Right ventricle myocardium superior (tissue), 1 donor: ENCODE measurements at regions of chr9 and their contacts with region 1.

Region 1: GRCh38 chr9:13804532-13804931 is 509.4 kb downstream of the NFIB start:
- DNase-seq: no peak
- ATAC-seq: no peak

Region 2: DNA sequence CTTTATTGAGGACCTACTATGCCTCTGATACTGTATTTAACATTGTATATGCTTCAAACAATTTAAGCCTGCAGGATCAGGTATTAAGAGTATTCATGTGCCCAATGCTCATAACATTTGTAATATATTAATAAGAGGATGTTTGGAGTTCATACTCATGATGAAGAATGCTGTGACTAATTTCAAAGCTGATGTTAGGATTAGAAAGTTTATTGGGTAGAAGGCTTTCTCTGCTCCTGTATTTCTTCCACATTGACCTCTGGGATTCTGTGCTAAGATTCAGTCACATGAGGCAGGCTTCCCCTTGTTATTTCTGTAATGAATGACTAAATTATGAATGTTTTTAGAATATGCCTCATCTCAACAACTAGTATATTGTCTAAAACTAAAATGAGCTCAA is 53.0 kb after region 1 on chr9:
- intact Hi-C with region 1: loop called (anchors 10 kb)
- DNase-seq: no peak
- ATAC-seq: no peak